ENCODE measurements at regions of chr22 and their contacts with region 1.

Region 1: GRCh38 chr22:16937811-16938210 is 70.2 kb downstream of the GAB4 start:
- DNase-seq: no peak
- ATAC-seq: no peak
- H3K4me3 ChIP-seq: no peak overlapping the region
- H3K27ac ChIP-seq: no peak overlapping the region
- H3K4me1 ChIP-seq: no peaks in the 10 kb centered on the region
- H3K27me3 ChIP-seq: peaks cover 0 to 21% (median 0%) of the 10 kb centered on the region in 9 donors
- CTCF ChIP-seq: no peak
- POLR2A ChIP-seq: no peak

Region 2: DNA sequence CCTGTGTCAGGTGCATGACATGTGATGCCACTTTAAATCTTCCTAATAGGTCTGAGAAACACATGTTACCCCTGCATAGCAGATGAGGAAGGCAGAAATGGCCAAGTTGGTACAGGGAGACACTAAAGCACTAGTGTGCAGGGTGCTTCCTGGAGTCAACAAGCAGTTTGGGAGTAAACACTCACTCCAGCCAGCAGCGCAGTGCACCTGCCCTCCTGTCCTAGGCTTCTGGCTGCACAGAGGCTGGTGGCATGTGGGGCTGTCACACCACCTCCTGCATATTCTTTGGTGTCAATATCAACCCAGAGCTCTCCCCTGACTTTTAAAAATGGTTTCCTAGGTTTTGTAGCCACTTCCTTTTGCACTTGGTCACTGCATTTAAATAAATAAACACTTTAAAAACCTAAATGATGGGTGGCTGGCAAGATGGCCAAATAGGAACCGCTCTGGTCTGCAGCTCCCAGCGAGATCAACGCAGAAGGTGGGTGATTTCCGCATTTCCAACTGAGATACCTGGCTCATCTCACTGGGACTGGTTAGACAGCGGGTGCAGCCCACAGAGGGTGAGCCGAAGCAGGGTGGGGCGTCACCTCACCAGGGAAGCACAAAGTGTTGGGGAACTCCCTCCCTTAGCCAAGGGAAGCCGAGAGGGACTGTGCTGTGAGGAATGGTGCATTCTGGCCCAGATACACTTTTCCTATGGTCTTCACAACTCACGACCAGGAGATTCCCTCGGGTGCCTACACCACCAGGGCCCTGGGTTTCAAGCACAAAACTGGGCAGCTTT is 36.7 kb after region 1 on chr22:
- intact Hi-C with region 1: loop called in 1 of 10 experiments (anchors 2 kb)
- DNase-seq: no peak
- ATAC-seq: no peak
- H3K4me3 ChIP-seq: no peak overlapping the region
- H3K27ac ChIP-seq: no peak overlapping the region
- H3K4me1 ChIP-seq: no peaks in the 10 kb centered on the region
- H3K27me3 ChIP-seq: peaks cover 0 to 25% (median 3%) of the 10 kb centered on the region in 9 donors
- CTCF ChIP-seq: no peak
- POLR2A ChIP-seq: no peak